ENCODE measurements at regions of chr16 and their contacts with region 1.

Region 1: DNA sequence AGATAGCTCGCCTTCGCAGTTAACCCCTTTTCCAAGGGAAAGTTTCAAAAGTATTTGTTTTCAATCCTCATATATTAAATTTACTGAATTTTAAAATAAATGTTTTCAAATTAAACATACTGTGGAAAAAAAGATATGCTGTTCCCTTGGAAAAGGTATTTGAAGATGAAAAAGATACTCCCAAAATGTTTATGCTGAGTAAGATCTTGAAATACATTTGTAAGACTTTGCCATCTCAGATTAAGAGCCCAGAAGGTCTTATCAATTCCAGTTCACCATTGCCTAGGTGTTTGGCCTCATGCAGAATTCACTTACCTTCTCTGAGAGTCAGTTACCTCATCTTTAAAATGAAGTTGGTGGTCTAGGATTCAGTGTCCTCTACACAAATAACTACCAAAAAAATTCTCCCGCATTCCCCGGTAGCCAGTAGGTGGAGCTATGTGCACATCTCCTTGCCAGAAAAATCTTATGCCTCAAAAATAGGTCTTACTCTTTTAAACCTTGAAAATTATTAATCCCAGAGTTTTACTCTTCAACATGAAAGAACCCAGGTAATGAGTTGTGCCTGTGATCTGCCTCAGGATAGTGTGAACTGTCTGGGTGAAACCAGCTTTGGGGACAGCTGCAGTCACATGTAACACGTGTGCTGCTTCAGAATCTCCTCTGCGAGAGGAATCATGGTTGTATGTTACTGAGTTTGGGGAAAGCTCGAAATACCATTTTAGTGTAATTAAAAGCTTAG is 178.3 kb downstream of the MRTFB start:
- DNase-seq: peak; percentile 11
- H3K4me3 ChIP-seq: no peak overlapping the region
- H3K27ac ChIP-seq: no peak overlapping the region
- H3K4me1 ChIP-seq: no peaks in the 10 kb centered on the region
- H3K27me3 ChIP-seq: no peaks in the 10 kb centered on the region
- CTCF ChIP-seq: peak; percentile 85

Region 2: GRCh38 chr16:13935408-13935807 is 314.1 kb before region 1 on chr16:
- CTCF ChIA-PET with region 1: no interaction called
- dilution Hi-C with region 1: loop called (anchors 25 kb)
- in situ Hi-C with region 1: no loop called
- intact Hi-C with region 1: no loop called
- DNase-seq: no peak
- H3K4me3 ChIP-seq: no peak overlapping the region
- H3K27ac ChIP-seq: no peak overlapping the region
- H3K4me1 ChIP-seq: peaks cover 7% of the 10 kb centered on the region
- H3K27me3 ChIP-seq: no peaks in the 10 kb centered on the region
- CTCF ChIP-seq: peak; percentile 51 to 53

Measured in mammary epithelial cell (primary cell).